Colonic mucosa (tissue), 4 donors: ENCODE measurements at regions of chr18 and their contacts with region 1.

Region 1: GRCh38 chr18:80023173-80023572 is 11.1 kb upstream of the RBFA start:
- DNase-seq: no peak
- H3K4me3 ChIP-seq: no peak overlapping the region
- H3K27ac ChIP-seq: no peak overlapping the region
- H3K4me1 ChIP-seq: no peaks in the 10 kb centered on the region
- H3K27me3 ChIP-seq: no peaks in the 10 kb centered on the region
- CTCF ChIP-seq: no peak

Region 2: GRCh38 chr18:80086281-80086680 is 63.1 kb after region 1 on chr18:
- intact Hi-C with region 1: loop called (anchors 10 kb)
- DNase-seq: no peak
- H3K4me3 ChIP-seq: no peak overlapping the region
- H3K27ac ChIP-seq: no peak overlapping the region
- H3K4me1 ChIP-seq: no peaks in the 10 kb centered on the region
- H3K27me3 ChIP-seq: no peaks in the 10 kb centered on the region
- CTCF ChIP-seq: no peak